ENCODE measurements at regions of chr7 and their contacts with region 1.

Region 1: GRCh38 chr7:113159746-113160339 is 41.5 kb upstream of the SMIM30 start:
- DNase-seq: peak; percentile 54
- H3K4me3 Mint-ChIP-seq: no peak overlapping the region
- H3K27ac Mint-ChIP-seq: no peak overlapping the region
- H3K4me1 Mint-ChIP-seq: no peaks in the 10 kb centered on the region
- H3K27me3 Mint-ChIP-seq: no peaks in the 10 kb centered on the region
- CTCF ChIP-seq: peak; percentile 71

Region 2: DNA sequence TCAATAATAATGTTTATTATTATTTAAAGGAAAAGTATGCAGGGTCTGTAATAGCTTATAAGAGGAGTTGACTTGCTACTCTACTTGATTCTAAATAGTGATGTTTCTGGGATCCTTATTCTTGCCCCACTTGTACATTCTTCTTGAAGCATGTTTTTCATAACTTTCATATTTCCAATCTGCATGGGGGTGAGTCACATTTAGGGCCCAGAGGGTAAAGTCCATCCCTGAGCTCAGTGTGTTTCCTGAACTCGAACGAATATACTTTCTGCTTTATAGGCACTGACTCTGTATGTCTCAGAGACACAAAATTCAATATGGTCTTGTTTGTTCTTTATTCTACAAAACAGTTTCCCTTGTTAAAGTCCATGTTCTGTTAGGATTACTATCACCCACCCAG is 19.5 kb after region 1 on chr7:
- CTCF ChIA-PET with region 1: interaction called, 10 read pairs
- intact Hi-C with region 1: no loop called
- DNase-seq: peak; percentile 26
- H3K4me3 Mint-ChIP-seq: no peak overlapping the region
- H3K27ac Mint-ChIP-seq: no peak overlapping the region
- H3K4me1 Mint-ChIP-seq: peaks cover 40% of the 10 kb centered on the region
- H3K27me3 Mint-ChIP-seq: no peaks in the 10 kb centered on the region
- CTCF ChIP-seq: no peak

Region 3: DNA sequence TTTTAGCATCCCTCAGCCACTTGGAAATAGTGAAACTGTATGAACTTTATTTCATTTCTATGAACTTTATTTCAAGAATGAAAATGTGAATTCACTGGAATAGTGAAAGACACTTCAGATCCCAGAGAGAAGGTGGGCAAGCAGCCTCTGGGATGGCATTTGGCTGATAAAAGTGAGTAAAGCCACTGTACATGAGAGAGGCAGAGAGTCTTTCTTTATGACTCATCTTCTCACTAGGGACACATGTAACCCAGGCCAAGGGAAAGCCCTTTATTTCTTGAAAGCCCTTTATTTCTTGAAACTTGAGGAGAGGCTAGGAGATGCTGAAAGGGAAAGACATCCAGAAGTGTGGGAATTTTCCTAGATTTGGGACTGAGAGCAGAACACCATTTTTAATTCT is 107.4 kb after region 1 on chr7:
- CTCF ChIA-PET with region 1: no interaction called
- intact Hi-C with region 1: no loop called
- DNase-seq: no peak
- H3K4me3 Mint-ChIP-seq: no peak overlapping the region
- H3K27ac Mint-ChIP-seq: no peak overlapping the region
- H3K4me1 Mint-ChIP-seq: no peaks in the 10 kb centered on the region
- H3K27me3 Mint-ChIP-seq: no peaks in the 10 kb centered on the region
- CTCF ChIP-seq: no peak

Region 4: GRCh38 chr7:113289140-113289740 is 129.4 kb after region 1 on chr7:
- CTCF ChIA-PET with region 1: interaction called, 26 read pairs
- intact Hi-C with region 1: loop called (anchors 1 kb)
- DNase-seq: peak; percentile 31
- H3K4me3 Mint-ChIP-seq: no peak overlapping the region
- H3K27ac Mint-ChIP-seq: no peak overlapping the region
- H3K4me1 Mint-ChIP-seq: no peaks in the 10 kb centered on the region
- H3K27me3 Mint-ChIP-seq: no peaks in the 10 kb centered on the region
- CTCF ChIP-seq: no peak

Region 5: DNA sequence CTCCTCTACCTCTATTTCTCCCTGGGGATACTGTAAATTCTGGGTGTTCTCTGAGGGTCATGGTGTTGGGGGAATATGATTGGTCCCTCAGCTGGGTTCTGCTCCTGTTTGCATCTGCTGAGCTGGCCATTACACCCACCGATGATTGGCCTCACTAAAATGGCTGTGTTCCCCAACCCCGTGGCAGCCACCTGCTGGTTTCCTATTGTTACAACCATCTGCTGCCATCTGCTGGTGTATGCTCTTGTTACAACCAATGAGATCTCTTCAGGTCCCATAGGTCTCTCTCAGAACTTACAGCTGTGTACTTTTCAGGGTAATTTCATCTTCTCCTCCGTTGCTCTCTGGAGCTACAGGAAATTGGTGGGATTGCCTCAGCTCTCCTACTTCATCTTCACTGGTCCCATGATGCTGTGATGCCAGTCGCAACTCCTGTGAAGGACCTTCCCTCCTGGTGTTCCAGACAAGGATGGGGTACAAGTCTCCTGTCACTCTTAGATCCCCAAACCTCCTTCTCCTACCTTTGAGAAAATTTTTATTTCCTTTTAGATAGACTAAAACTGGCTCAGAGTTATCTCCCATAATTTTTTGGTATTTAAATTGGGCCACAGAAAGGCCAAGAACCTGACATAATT is 262.0 kb after region 1 on chr7:
- CTCF ChIA-PET with region 1: interaction called, 29 read pairs
- intact Hi-C with region 1: loop called (anchors 1 kb)
- DNase-seq: peak; percentile 79
- H3K4me3 Mint-ChIP-seq: no peak overlapping the region
- H3K27ac Mint-ChIP-seq: no peak overlapping the region
- H3K4me1 Mint-ChIP-seq: peaks cover 7% of the 10 kb centered on the region
- H3K27me3 Mint-ChIP-seq: no peaks in the 10 kb centered on the region
- CTCF ChIP-seq: peak; percentile 78

Measured in Calu3 (cell line).